Activated naive CD4-positive, alpha-beta T cell treated with anti-CD3 and anti-CD28 coated beads for 36 hours (primary cell): ENCODE measurements at regions of chr4 and their contacts with region 1.

Region 1: DNA sequence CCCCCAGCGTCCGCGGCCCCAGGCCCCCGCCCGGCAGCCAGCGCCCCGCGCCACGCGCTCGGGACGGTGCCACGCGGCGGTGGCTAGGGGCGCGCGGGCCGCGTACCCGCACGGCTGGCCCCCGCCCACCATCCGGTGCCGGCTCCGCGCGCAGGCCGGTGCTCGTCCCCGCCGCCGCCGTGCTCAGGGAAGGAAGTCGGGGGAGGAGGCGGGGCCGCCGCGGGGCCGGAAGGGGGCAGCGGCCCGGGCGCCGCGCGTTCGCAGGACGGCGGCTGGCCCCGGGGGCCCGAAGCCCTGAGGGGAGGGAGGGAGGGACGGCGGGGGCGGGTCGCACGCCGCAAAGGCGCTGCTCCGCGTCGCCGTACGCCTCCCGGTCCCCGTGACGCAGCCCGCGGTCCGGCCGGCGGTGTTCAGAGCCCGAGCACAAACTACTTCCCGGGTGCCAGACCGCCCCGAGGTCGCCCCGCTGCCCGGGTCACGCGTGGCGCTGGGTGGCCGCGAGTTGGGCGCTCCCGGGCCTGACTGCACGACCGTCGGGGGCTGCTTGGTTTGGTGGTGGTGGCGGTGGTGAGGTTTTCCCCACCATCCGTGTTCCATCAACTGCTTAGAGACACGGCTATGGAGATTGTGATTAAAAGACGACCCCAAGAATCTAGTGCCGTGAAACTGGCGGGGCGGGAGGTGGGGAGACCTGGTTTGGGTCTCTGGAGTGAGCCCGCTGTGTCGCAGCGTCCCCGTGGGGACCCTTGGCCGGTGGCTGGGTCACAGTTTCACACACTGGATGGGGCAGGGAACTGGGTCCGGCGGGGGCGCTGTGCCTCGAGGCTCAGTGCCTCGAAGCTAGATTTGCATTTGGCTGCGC is at the start of gene DCTD:
- DNase-seq: peak; percentile 83
- H3K4me3 Mint-ChIP-seq: peak within 1 kb of the TSS; percentile 86
- H3K27ac Mint-ChIP-seq: peak within 1 kb of the TSS; percentile 92
- H3K4me1 Mint-ChIP-seq: peaks cover 53% of the 10 kb centered on the region
- H3K27me3 Mint-ChIP-seq: no peaks in the 10 kb centered on the region
- total RNA-seq, gene DCTD: 137 to 152 TPM

Region 2: DNA sequence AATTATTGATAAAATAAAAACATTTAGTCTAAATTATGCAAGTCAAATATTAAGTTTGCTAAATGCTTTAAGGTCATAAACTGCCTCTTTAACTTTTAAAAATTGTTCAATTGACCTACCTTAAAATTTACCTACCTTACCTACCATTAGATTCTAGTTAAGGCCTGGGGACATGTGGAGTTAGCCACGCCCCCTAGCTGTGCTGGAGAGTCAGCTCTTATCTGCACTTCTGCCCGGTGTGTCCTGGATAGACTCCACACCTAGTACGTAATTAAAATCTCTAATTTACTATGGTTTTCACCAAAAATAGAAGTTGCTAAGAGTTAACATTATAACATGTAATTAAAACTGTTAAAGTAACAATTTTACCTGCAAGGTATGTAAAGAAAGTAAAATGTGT is 651.5 kb before region 1 on chr4:
- CTCF ChIA-PET with region 1: no interaction called
- intact Hi-C with region 1: no loop called
- DNase-seq: no peak
- H3K4me3 Mint-ChIP-seq: no peak overlapping the region
- H3K27ac Mint-ChIP-seq: no peak overlapping the region
- H3K4me1 Mint-ChIP-seq: no peaks in the 10 kb centered on the region
- H3K27me3 Mint-ChIP-seq: no peaks in the 10 kb centered on the region

Region 3: DNA sequence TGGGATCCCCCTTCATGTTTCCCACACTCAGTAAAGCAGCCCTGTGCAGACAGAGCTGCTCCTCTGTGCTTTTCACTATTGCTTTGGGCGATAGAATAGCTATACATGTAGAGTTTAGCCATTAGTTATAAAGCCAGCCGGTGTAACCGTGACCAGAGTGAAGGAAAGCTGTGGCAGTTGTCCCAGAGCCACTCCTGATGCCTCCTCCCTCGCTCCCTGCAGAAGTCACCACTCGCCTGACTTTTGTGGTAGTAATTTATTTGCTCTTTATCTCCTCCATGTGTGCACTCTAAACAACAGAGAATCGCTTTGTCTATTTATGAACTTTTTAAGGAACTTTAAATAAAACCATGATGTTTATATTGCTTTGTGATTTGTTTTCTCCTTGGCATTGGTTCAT is 139.8 kb after region 1 on chr4:
- CTCF ChIA-PET with region 1: no interaction called
- intact Hi-C with region 1: no loop called
- DNase-seq: no peak
- H3K4me3 Mint-ChIP-seq: no peak overlapping the region
- H3K27ac Mint-ChIP-seq: no peak overlapping the region
- H3K4me1 Mint-ChIP-seq: no peaks in the 10 kb centered on the region
- H3K27me3 Mint-ChIP-seq: peaks cover 9% of the 10 kb centered on the region

Region 4: DNA sequence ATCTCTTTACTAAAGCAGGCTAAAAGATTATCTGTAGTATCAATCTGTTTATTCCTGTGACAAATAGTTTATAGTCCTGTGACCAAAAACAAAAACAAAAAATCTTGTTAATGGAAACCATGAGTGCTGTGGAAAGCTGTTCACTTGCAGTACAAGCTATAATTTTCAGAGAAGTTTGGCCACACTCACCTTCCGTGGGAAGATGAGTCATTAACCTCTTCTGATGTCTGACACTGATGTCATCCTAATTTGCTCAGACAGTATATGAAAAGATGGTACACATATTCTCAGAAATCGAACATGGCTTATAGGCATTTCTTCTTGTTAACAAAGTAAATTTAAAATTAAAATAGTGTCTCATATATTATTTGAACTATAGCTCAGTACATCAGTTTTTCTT is 1320.2 kb after region 1 on chr4:
- CTCF ChIA-PET with region 1: no interaction called
- intact Hi-C with region 1: loop called (anchors 10 kb)
- DNase-seq: peak; percentile 84
- H3K4me3 Mint-ChIP-seq: peak overlapping the region; percentile 32
- H3K27ac Mint-ChIP-seq: peak overlapping the region; percentile 93
- H3K4me1 Mint-ChIP-seq: peaks cover 40% of the 10 kb centered on the region
- H3K27me3 Mint-ChIP-seq: no peaks in the 10 kb centered on the region